Heart right ventricle (tissue), 16 donors: ENCODE measurements at regions of chr1 and their contacts with region 1.

Region 1: DNA sequence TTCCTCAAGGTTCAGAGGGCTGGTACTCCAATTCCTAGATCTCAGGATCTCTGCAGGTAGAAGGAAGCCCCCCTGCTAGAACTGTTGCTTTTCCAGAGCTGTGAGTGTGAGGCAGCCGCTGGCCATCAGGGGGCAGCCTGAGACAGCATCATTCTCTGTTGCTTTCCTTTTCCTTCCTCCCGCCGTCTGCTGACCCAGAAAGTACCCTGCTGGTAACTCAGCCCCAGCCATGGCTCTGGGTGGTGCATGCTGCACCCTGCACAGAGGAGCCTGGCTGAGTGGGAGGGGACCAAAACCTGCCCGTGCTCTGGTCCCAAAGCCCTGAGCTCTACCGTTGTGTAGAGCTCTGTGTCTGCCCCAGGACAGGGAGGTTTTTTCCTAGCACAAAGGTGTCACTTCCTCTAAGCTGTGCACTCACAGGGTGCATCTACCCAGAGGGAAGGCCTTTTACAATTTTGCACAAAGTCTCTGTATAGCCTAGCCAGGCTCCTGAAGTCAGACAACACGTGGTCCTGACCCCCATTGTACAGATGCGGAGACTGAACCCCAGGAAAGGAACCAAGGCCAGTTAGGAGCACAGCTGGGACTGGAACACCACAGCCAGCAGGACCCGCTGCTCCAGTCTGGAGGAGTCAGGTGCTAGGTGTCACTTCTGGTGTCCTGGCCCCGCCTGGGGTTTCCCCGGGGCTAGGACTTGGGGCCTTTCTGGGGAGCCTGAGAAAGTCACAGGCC is 5.6 kb upstream of the FAM131C start:
- DNase-seq: peak; percentile 76 to 79
- ATAC-seq: peak; percentile 40 to 82 (median 66)
- H3K4me3 ChIP-seq: peak overlapping the region in 2 of 10 donors; percentile 15 to 29
- H3K27ac ChIP-seq: peak overlapping the region in 4 of 10 donors; percentile 4 to 32 (median 10)
- H3K4me1 ChIP-seq: peaks cover 2 to 68% (median 31%) of the 10 kb centered on the region in 9 donors
- H3K27me3 ChIP-seq: peaks cover 0 to 10% (median 0%) of the 10 kb centered on the region in 7 donors
- CTCF ChIP-seq: peak; percentile 83 to 93 (median 89)

Region 2: GRCh38 chr1:15756143-15757015 is 322.7 kb before region 1 on chr1:
- intact Hi-C with region 1: no loop called
- DNase-seq: no peak
- ATAC-seq: no peak
- H3K4me3 ChIP-seq: no peak overlapping the region
- H3K27ac ChIP-seq: no peak overlapping the region
- H3K4me1 ChIP-seq: peaks cover 14 to 49% (median 37%) of the 10 kb centered on the region in 9 donors
- H3K27me3 ChIP-seq: peaks cover 0 to 53% (median 16%) of the 10 kb centered on the region in 7 donors
- CTCF ChIP-seq: no peak

Region 3: GRCh38 chr1:16139473-16139962 is 60.4 kb after region 1 on chr1:
- intact Hi-C with region 1: loop called in 2 of 10 experiments (anchors 5 to 10 kb)
- DNase-seq: no peak
- ATAC-seq: no peak
- H3K4me3 ChIP-seq: no peak overlapping the region
- H3K27ac ChIP-seq: peak overlapping the region in 9 of 10 donors; percentile 52 to 92 (median 87)
- H3K4me1 ChIP-seq: peaks cover 41 to 62% (median 54%) of the 10 kb centered on the region in 9 donors
- H3K27me3 ChIP-seq: no peaks in the 10 kb centered on the region
- CTCF ChIP-seq: no peak

Region 4: DNA sequence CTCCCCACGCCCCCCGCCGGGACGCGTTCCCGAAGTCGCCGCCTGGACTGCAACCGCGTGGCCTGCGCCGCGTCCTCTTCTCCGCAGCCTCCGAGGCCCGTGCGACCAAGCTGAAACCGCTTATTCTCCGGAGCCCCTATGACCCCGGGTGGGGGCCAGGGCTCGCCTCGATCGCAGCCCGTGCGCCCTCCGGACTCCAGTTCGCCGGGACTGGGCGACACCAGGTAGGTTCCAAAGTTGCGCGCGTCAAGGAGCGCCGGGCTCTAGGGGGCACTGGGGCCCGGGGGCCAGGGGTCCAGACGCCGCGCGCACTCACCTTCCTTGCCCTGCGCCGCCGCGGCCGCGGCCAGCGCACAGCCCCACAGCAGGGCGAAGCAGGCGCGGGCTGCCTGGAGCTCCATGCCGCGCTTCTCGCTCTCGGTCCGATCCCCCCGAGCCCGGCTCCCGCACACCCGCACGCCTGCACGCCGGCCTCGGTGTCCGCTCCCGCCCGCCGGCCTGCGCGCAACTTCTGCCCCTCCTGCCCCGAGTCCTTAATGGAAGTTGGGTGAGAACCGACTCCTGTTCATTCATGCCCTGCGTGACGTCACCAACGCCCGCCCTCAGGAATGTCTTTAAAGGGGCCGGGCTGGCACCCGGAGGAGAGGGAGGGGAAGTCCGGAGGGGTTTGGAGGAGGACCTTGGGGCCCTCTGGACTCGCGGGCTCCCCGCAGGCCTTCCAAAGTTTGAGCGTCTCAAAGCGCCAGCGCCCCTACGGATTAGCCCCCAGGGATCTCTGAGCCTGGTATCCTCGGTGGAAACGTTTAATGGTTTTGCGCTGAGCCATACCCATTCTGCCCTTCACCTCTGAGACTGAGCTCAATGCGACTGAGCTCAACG is 76.7 kb after region 1 on chr1 and contains the start of gene EPHA2:
- intact Hi-C with region 1: loop called in 5 of 10 experiments (anchors 2 kb)
- DNase-seq: peak; percentile 90 to 92
- ATAC-seq: peak; percentile 64 to 79 (median 73)
- H3K4me3 ChIP-seq: peak within 1 kb of the TSS; percentile 57 to 95 (median 81)
- H3K27ac ChIP-seq: peak within 1 kb of the TSS; percentile 77 to 97 (median 94)
- H3K4me1 ChIP-seq: peaks cover 27 to 71% (median 49%) of the 10 kb centered on the region in 9 donors
- H3K27me3 ChIP-seq: peaks cover 0 to 33% (median 0%) of the 10 kb centered on the region in 7 donors
- CTCF ChIP-seq: peak in 2 of 9 donors; percentile 12 to 22
- total RNA-seq, gene EPHA2: 8.3 to 25.1 (median 11.9) TPM

Region 5: DNA sequence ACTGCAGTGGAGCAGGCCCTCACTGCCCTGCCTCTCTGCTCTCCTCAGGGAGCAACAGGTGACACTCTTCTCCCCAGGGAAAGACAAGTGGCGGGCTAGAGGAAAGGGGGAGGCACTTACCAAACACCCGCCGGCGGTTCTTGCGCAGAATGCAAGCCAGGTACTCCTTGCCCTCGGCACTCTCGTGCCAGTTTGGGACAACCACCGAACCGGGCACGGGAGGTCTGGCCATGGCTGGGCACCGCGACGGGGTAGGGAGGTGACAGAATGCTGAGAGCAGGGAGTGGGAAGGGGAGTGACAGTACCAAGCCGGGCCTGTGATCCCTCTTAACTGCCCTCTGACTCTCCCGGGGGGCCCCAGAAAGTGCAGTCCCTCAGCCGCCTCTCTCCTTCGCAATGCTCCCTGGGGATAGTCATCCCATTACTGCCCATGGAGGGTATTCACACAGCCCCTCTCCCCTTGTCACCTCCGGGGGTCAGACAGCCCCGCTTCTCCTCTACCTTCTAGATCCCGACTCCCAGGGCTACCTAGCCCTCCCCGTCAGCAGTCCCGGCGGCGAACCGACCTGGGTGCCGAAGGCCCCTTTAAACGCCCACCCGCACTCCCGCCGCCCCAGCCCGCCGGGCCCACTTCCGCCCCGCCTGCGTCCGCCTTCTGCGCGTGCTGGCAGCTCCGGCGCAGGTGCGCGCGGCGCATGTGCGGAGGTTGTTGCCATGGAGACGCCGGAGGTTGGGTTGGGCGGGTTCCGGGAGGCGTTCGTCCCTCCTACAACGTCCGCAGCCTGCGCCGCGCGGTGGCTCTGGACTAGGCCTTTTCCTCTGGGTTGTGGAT is 157.6 kb after region 1 on chr1 and contains the start of gene CPLANE2:
- intact Hi-C with region 1: loop called in 4 of 10 experiments (anchors 5 kb)
- DNase-seq: peak; percentile 95
- ATAC-seq: peak; percentile 94 to 98 (median 96)
- H3K4me3 ChIP-seq: peak within 1 kb of the TSS; percentile 51 to 72 (median 69)
- H3K27ac ChIP-seq: peak within 1 kb of the TSS; percentile 52 to 93 (median 85)
- H3K4me1 ChIP-seq: peaks cover 0 to 25% (median 19%) of the 10 kb centered on the region in 9 donors
- H3K27me3 ChIP-seq: no peaks in the 10 kb centered on the region
- CTCF ChIP-seq: peak in 4 of 9 donors; percentile 1 to 32 (median 30)
- total RNA-seq, gene CPLANE2: 3.9 to 11.1 (median 7.2) TPM

Region 6: GRCh38 chr1:16366722-16367257 is 287.7 kb after region 1 on chr1 and contains the start of gene SZRD1:
- intact Hi-C with region 1: loop called in 9 of 10 experiments (anchors 5 to 10 kb)
- DNase-seq: peak; percentile 95 to 97
- ATAC-seq: peak; percentile 91 to 97 (median 94)
- H3K4me3 ChIP-seq: peak within 1 kb of the TSS; percentile 50 to 96 (median 75)
- H3K27ac ChIP-seq: peak within 1 kb of the TSS; percentile 91 to 99 (median 98)
- H3K4me1 ChIP-seq: peaks cover 12 to 69% (median 33%) of the 10 kb centered on the region in 9 donors
- H3K27me3 ChIP-seq: no peaks in the 10 kb centered on the region
- CTCF ChIP-seq: no peak
- total RNA-seq, gene SZRD1: 87.1 to 131 (median 102) TPM